ENCODE measurements at regions of chr6 and their contacts with region 1.

Region 1: GRCh38 chr6:142167486-142167885 is 20.4 kb downstream of the VTA1 start:
- DNase-seq: no peak
- H3K4me3 ChIP-seq: no peak overlapping the region
- H3K27ac ChIP-seq: no peak overlapping the region
- H3K4me1 ChIP-seq: peaks cover 0 to 11% (median 9%) of the 10 kb centered on the region in 4 donors
- H3K27me3 ChIP-seq: no peaks in the 10 kb centered on the region
- CTCF ChIP-seq: no peak
- EP300 ChIP-seq: no peak
- POLR2A ChIP-seq: no peak

Region 2: GRCh38 chr6:141980118-141980573 is 187.3 kb before region 1 on chr6:
- intact Hi-C with region 1: no loop called
- DNase-seq: no peak
- H3K4me3 ChIP-seq: no peak overlapping the region
- H3K27ac ChIP-seq: no peak overlapping the region
- H3K4me1 ChIP-seq: no peaks in the 10 kb centered on the region
- H3K27me3 ChIP-seq: no peaks in the 10 kb centered on the region
- CTCF ChIP-seq: no peak
- EP300 ChIP-seq: no peak
- POLR2A ChIP-seq: no peak

Region 3: GRCh38 chr6:142387997-142388815 is 220.7 kb after region 1 on chr6:
- intact Hi-C with region 1: loop called (anchors 10 kb)
- DNase-seq: no peak
- H3K4me3 ChIP-seq: no peak overlapping the region
- H3K27ac ChIP-seq: no peak overlapping the region
- H3K4me1 ChIP-seq: no peaks in the 10 kb centered on the region
- H3K27me3 ChIP-seq: no peaks in the 10 kb centered on the region
- CTCF ChIP-seq: peak; percentile 21 to 53 (median 44)
- EP300 ChIP-seq: no peak
- POLR2A ChIP-seq: no peak